ENCODE measurements at regions of chr9 and their contacts with region 1.

Region 1: GRCh38 chr9:128656416-128657343 is at the start of gene DYNC2I2:
- DNase-seq: peak; percentile 80
- ATAC-seq: peak; percentile 73
- H3K4me3 Mint-ChIP-seq: peak within 1 kb of the TSS; percentile 92
- H3K27ac Mint-ChIP-seq: peak within 1 kb of the TSS; percentile 99
- H3K4me1 Mint-ChIP-seq: peaks cover 18% of the 10 kb centered on the region
- H3K27me3 Mint-ChIP-seq: no peaks in the 10 kb centered on the region
- CTCF ChIP-seq: no peak
- total RNA-seq, gene DYNC2I2: 58.0 and 60.2 TPM in 2 replicates

Region 2: GRCh38 chr9:128683340-128684278 is 26.9 kb after region 1 on chr9:
- CTCF ChIA-PET with region 1: no interaction called
- POLR2A ChIA-PET with region 1: interaction called, 16 read pairs
- intact Hi-C with region 1: loop called (anchors 1 kb)
- DNase-seq: peak; percentile 56
- ATAC-seq: peak; percentile 57
- H3K4me3 Mint-ChIP-seq: peak overlapping the region; percentile 100
- H3K27ac Mint-ChIP-seq: peak overlapping the region; percentile 99
- H3K4me1 Mint-ChIP-seq: peaks cover 59% of the 10 kb centered on the region
- H3K27me3 Mint-ChIP-seq: no peaks in the 10 kb centered on the region
- CTCF ChIP-seq: no peak

Region 3: GRCh38 chr9:128688512-128689292 is 32.0 kb after region 1 on chr9 and contains the start of gene SET:
- CTCF ChIA-PET with region 1: no interaction called
- POLR2A ChIA-PET with region 1: interaction called, 16 read pairs
- intact Hi-C with region 1: loop called (anchors 1 kb)
- DNase-seq: peak; percentile 97
- ATAC-seq: peak; percentile 81
- H3K4me3 Mint-ChIP-seq: peak within 1 kb of the TSS; percentile 98
- H3K27ac Mint-ChIP-seq: peak within 1 kb of the TSS; percentile 87
- H3K4me1 Mint-ChIP-seq: peaks cover 68% of the 10 kb centered on the region
- H3K27me3 Mint-ChIP-seq: no peaks in the 10 kb centered on the region
- CTCF ChIP-seq: no peak
- total RNA-seq, gene SET: 762 and 801 TPM in 2 replicates

Region 4: GRCh38 chr9:128702445-128702948 is 45.8 kb after region 1 on chr9 and contains the start of gene PKN3:
- CTCF ChIA-PET with region 1: no interaction called
- POLR2A ChIA-PET with region 1: interaction called, 5 read pairs
- intact Hi-C with region 1: loop called (anchors 1 kb)
- DNase-seq: peak; percentile 91
- ATAC-seq: peak; percentile 85
- H3K4me3 Mint-ChIP-seq: peak within 1 kb of the TSS; percentile 85
- H3K27ac Mint-ChIP-seq: peak within 1 kb of the TSS; percentile 24
- H3K4me1 Mint-ChIP-seq: peaks cover 13% of the 10 kb centered on the region
- H3K27me3 Mint-ChIP-seq: no peaks in the 10 kb centered on the region
- CTCF ChIP-seq: peak; percentile 57
- total RNA-seq, gene PKN3: 16.9 and 17.4 TPM in 2 replicates

Region 5: DNA sequence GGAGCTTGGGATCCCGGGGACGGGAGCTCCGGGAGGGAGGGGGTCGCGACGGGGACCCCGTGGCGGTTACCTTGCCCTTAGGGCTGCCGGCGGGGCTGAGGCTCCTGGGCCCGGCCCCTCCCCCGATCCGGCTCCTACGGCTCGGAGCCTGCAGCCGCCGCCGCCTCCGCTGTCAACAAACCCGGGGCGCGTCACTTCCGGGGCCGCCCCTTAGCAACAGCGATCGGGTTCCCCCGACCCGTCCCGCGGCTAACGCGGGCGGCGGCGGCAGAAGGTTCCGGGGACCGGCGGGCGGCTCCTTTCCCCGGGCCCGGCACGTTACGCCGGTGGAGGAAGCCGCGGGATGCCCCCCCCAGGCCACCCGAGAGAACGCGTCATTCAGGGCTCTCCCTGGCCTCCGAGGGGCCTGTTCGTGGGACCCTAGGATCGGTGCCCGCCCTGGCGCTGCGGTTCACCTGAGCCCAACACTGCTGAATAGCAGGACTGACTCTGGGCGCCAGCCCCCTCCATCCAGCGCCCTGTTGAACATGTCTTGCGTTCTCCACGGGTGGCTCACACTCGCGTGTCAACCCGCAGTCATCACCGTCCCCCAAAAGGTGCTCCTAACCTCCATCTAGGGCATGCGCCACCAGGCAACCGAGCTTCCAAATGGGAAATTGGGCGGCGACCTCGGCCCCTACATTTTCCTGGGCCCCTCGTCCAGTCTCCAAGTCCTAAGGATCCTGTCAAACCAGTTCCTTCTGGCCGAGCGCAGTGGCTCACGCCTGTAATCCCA is 115.3 kb after region 1 on chr9 and contains the start of gene ZER1:
- CTCF ChIA-PET with region 1: no interaction called
- POLR2A ChIA-PET with region 1: interaction called, 3 read pairs
- intact Hi-C with region 1: loop called (anchors 1 kb)
- DNase-seq: peak; percentile 96
- ATAC-seq: peak; percentile 93
- H3K4me3 Mint-ChIP-seq: peak within 1 kb of the TSS; percentile 92
- H3K27ac Mint-ChIP-seq: peak within 1 kb of the TSS; percentile 89
- H3K4me1 Mint-ChIP-seq: peaks cover 24% of the 10 kb centered on the region
- H3K27me3 Mint-ChIP-seq: no peaks in the 10 kb centered on the region
- CTCF ChIP-seq: no peak
- total RNA-seq, gene ZER1: 24.0 and 26.0 TPM in 2 replicates

Region 6: GRCh38 chr9:128786681-128787601 is 130.3 kb after region 1 on chr9 and contains the start of gene TBC1D13:
- CTCF ChIA-PET with region 1: no interaction called
- POLR2A ChIA-PET with region 1: interaction called, 3 read pairs
- intact Hi-C with region 1: loop called (anchors 1 kb)
- DNase-seq: peak; percentile 96
- ATAC-seq: peak; percentile 95
- H3K4me3 Mint-ChIP-seq: peak within 1 kb of the TSS; percentile 95
- H3K27ac Mint-ChIP-seq: peak within 1 kb of the TSS; percentile 85
- H3K4me1 Mint-ChIP-seq: peaks cover 17% of the 10 kb centered on the region
- H3K27me3 Mint-ChIP-seq: no peaks in the 10 kb centered on the region
- CTCF ChIP-seq: no peak
- total RNA-seq, gene TBC1D13: 21.5 and 26.4 TPM in 2 replicates

Measured in activated B cell treated with CpG ODN at 0.5 μM for 24 hours (primary cell).